Mammary epithelial cell (primary cell): ENCODE measurements at regions of chr6 and their contacts with region 1.

Region 1: GRCh38 chr6:133880896-133881295 is 8.0 kb upstream of the TCF21 start:
- DNase-seq: no peak
- H3K4me3 ChIP-seq: no peak overlapping the region
- H3K27ac ChIP-seq: no peak overlapping the region
- H3K4me1 ChIP-seq: no peaks in the 10 kb centered on the region
- H3K27me3 ChIP-seq: peaks cover 9% of the 10 kb centered on the region
- CTCF ChIP-seq: no peak

Region 2: GRCh38 chr6:133787859-133788505 is 92.9 kb before region 1 on chr6:
- CTCF ChIA-PET with region 1: no interaction called
- dilution Hi-C with region 1: loop called (anchors 5 kb)
- in situ Hi-C with region 1: no loop called
- intact Hi-C with region 1: no loop called
- DNase-seq: no peak
- H3K4me3 ChIP-seq: no peak overlapping the region
- H3K27ac ChIP-seq: no peak overlapping the region
- H3K4me1 ChIP-seq: no peaks in the 10 kb centered on the region
- H3K27me3 ChIP-seq: no peaks in the 10 kb centered on the region
- CTCF ChIP-seq: no peak

Region 3: DNA sequence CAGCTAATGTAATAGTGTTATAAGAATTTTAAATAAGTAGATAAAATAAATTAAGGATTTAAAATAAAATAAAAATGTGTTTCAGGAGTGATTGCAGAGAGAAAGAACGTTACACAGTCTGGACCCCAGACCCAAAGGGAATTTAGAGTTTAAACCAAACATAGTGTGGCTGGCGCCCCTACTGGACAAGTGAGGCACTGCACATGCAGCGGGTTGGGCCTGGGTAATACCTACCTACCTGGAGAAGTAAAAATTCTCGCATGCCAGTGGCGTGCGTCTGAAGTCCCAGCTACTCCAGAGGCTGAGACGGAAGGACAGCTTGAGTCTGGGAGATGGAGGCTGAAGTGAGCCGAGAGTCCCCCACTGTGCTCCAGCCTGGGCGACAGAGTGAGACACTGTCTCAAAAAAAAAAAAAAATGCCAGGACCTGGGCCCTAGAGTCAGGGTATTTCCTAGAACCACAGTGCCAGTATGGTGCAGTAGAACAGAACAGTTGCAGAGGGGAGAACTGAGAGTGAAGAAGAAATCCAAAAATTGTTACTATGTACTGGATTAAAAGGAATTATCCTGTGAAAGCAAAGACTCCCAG is 63.3 kb before region 1 on chr6:
- CTCF ChIA-PET with region 1: no interaction called
- dilution Hi-C with region 1: no loop called
- in situ Hi-C with region 1: no loop called
- intact Hi-C with region 1: no loop called
- DNase-seq: no peak
- H3K4me3 ChIP-seq: no peak overlapping the region
- H3K27ac ChIP-seq: no peak overlapping the region
- H3K4me1 ChIP-seq: peaks cover 2% of the 10 kb centered on the region
- H3K27me3 ChIP-seq: no peaks in the 10 kb centered on the region
- CTCF ChIP-seq: peak; percentile 53 to 58

Region 4: DNA sequence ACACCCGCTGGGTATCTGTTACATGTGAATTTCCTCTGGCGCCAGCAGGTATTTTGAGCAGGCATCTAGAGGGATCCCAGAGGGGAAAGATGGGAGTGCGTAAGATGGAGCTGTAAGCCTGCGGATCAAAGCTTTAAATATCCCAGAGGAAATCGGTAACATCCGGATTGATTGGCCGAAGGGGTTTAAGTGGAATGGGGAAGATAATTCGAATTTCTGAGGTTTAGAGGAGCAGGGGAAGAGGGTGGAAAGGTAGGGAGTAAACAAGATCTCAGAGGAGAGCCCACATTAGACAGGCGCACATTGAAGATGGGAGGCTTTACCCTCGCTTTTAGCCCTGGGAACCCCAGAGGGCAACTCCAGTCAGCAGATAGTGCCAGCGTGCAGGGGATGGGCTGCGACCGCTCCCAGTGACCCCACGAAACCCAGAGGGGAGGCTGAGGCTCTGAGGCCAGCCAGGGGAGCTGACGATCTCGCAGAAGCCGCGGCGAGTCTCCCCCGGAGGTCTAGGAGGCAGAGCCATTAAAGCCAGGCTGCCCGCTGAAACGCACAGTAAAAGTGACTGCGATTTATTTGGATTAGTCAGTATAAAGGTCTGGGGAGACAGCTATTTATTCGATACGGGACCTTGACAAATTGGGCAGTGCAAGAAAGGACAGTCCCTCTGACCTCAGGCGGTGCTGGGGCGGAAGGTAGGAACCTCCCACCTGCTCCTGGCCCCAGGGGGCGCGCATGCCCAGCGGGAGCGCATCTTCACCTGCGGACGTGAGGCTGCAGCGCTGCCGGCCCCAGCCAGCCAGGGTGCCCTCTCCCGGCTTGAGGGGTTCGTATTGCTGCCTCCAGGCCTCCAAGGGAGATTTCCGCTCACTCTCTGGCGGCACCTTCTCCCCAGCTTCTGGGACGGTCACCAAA is 26.3 kb before region 1 on chr6:
- CTCF ChIA-PET with region 1: no interaction called
- dilution Hi-C with region 1: no loop called
- in situ Hi-C with region 1: no loop called
- intact Hi-C with region 1: no loop called
- DNase-seq: no peak
- H3K4me3 ChIP-seq: no peak overlapping the region
- H3K27ac ChIP-seq: no peak overlapping the region
- H3K4me1 ChIP-seq: no peaks in the 10 kb centered on the region
- H3K27me3 ChIP-seq: peaks cover 26% of the 10 kb centered on the region
- CTCF ChIP-seq: no peak